Breast epithelium (tissue), 4 donors: ENCODE measurements at regions of chr2 and their contacts with region 1.

Region 1: DNA sequence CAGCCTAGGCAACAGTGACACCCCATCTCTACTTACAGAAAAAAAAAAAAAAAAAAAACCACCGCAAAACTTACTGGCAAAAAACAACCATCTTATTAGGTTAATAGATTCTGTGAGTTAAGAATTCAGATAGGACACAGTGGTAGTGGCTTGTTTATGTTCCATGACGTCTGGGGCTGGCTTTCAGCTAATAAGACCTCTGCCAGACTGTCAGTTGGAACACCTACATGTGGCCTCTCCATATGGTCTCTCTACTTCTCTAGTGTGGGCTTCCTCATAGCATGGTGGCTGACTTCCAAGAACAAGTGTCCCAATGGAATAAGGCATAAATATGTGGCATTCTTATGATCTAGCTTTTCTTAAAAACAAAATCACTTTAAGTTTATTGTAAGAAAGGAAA is 94.0 kb upstream of the OTX1 start:
- DNase-seq: no peak
- H3K4me3 ChIP-seq: no peak overlapping the region
- H3K27ac ChIP-seq: no peak overlapping the region
- H3K4me1 ChIP-seq: no peaks in the 10 kb centered on the region
- H3K27me3 ChIP-seq: no peaks in the 10 kb centered on the region
- CTCF ChIP-seq: no peak
- POLR2A ChIP-seq: no peak

Region 2: DNA sequence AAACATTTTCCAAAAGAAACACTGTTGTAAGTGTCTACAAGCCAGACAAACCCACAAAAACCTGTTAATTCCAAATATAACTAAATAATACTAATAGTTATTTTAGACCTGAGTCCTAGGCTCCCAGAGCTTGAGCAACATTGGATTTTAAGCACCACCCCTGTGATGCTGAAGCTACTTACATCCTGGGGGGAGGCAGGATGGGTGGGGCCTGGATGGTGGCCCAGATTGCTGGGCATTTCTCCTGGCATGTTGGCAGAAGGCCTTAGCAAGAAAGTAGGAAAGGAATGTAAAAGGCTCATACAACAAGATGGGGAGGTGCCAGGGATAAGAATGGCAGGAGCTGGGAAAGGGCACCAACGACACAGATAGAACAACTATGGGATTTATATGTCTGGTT is 43.3 kb after region 1 on chr2:
- intact Hi-C with region 1: loop called (anchors 5 kb)
- DNase-seq: no peak
- H3K4me3 ChIP-seq: no peak overlapping the region
- H3K27ac ChIP-seq: no peak overlapping the region
- H3K4me1 ChIP-seq: no peaks in the 10 kb centered on the region
- H3K27me3 ChIP-seq: no peaks in the 10 kb centered on the region
- CTCF ChIP-seq: no peak
- POLR2A ChIP-seq: no peak